ENCODE measurements at regions of chr11 and their contacts with region 1.

Region 1: DNA sequence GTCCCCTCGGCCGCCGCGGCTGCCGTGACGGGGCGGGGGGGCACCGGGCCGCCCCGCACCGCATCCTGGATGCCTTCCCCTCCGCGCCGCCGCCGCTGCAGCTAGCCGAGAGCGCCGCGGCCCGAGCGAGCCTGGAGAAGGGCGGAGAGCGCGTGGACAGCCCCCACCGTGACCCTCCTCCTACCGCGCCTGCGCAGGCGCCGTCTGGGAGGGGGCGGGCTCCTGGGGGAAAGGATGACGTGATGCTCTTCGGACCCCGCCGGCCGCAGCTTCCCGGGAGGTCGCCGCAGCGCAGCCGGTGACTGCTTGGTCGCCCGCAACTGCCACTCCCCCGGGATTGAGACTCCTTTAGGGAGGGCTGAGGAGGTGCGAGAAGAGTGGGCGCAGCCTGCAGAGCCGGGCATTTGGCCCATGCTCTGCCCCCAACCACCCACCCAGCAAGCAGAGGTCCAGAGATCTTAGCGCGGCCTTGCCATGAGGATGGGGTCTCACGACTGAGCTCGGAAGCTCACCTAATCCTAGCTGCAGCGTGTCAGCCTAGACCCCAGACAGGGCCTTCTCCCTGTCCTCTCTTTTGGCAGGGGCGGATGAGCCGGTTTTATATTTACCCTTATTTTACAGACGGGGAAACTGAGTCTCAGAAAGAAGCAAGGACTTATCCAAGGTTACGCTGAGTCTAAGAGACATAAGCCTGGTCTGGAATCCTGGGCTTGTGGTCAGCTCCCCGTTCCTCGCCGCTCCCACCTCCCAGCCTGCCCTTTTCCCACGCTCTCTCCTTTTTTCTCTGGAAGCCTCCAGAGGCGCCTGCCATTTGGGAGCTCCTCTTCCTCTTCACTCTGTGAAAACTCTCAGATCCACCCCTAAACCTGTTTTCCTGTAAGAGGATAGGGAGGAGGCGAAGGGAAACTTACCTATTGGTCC is at the start of gene DENND5A:
- DNase-seq: peak; percentile 40 to 57
- H3K4me3 ChIP-seq: peak within 1 kb of the TSS; percentile 59
- H3K27ac ChIP-seq: no peak within 1 kb of the TSS
- H3K4me1 ChIP-seq: peaks cover 11% of the 10 kb centered on the region
- H3K27me3 ChIP-seq: no peaks in the 10 kb centered on the region
- CTCF ChIP-seq: no peak
- total RNA-seq, gene DENND5A: 17.7 and 19.8 TPM in 2 replicates

Region 2: DNA sequence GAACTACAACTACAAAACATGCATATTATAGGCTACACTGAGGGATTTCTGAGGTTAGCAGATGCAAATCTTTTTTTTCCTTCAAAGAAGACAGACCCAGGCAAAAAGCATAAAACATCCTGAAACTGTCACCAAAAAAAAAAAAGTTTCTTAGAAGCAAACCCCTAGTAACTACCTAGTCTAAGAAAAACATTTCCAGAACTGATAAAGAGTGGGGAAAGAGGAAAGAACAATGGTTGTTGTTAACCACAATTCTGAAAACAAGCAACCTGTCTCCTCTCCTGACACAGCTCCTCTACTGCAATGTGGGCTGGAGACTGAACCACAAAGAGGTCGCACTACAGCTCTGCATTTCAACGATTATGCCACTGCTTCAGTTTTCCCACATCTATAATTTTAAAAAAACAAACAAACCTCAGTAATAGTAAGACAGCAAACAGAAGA is 15.3 kb before region 1 on chr11:
- CTCF ChIA-PET with region 1: no interaction called
- POLR2A ChIA-PET with region 1: interaction called, 35 read pairs
- intact Hi-C with region 1: no loop called
- DNase-seq: no peak
- H3K4me3 ChIP-seq: no peak overlapping the region
- H3K27ac ChIP-seq: no peak overlapping the region
- H3K4me1 ChIP-seq: no peaks in the 10 kb centered on the region
- H3K27me3 ChIP-seq: no peaks in the 10 kb centered on the region
- CTCF ChIP-seq: no peak

Measured in PC-9 (cell line).